Endothelial cell of umbilical vein (primary cell): ENCODE measurements at regions of chr18 and their contacts with region 1.

Region 1: GRCh38 chr18:71022389-71022788 is 733.5 kb downstream of the SOCS6 start:
- DNase-seq: peak; percentile 73
- H3K4me3 ChIP-seq: no peak overlapping the region
- H3K27ac ChIP-seq: peak overlapping the region; percentile 35
- H3K4me1 ChIP-seq: peaks cover 52% of the 10 kb centered on the region
- H3K27me3 ChIP-seq: no peaks in the 10 kb centered on the region
- CTCF ChIP-seq: no peak
- POLR2A ChIP-seq: no peak

Region 2: DNA sequence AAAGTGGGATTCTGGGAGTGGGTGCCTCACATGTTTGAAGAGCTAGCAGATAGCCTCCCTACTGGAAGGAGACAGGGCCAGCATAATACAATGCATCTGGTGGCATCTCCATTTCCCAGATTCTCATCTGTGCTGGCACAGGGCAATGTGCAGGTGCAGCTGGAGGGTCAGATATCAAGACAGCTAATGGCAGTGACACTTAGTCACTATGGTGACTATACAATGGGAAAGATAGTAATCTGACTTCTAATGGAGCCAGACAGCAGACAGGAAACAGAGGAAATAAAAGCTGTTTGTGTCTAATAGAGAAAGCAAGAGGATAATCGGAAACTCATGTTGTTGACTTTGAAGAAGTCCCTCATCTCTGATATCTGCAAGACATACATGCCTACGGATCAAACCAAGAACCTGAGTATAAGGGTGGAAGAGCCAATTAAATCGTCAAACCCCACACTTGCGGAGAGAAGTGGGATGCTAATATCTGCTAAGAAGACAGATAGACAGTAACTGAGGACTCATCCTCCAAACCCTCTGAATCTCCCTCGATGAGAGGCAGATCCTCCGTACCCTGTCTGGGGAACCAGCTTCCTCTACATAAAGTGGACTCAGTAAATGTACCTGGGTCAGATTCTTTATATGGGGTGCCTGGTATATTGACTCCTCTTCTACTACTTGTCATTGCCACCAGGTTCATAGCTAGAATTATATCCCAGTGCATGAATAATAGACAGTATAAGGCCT is 40.8 kb before region 1 on chr18:
- CTCF ChIA-PET with region 1: interaction called, 4 read pairs
- POLR2A ChIA-PET with region 1: no interaction called
- dilution Hi-C with region 1: no loop called
- intact Hi-C with region 1: loop called (anchors 1 kb)
- DNase-seq: peak; percentile 73
- H3K4me3 ChIP-seq: no peak overlapping the region
- H3K27ac ChIP-seq: peak overlapping the region; percentile 69
- H3K4me1 ChIP-seq: peaks cover 14% of the 10 kb centered on the region
- H3K27me3 ChIP-seq: no peaks in the 10 kb centered on the region
- CTCF ChIP-seq: no peak
- POLR2A ChIP-seq: no peak

Region 3: DNA sequence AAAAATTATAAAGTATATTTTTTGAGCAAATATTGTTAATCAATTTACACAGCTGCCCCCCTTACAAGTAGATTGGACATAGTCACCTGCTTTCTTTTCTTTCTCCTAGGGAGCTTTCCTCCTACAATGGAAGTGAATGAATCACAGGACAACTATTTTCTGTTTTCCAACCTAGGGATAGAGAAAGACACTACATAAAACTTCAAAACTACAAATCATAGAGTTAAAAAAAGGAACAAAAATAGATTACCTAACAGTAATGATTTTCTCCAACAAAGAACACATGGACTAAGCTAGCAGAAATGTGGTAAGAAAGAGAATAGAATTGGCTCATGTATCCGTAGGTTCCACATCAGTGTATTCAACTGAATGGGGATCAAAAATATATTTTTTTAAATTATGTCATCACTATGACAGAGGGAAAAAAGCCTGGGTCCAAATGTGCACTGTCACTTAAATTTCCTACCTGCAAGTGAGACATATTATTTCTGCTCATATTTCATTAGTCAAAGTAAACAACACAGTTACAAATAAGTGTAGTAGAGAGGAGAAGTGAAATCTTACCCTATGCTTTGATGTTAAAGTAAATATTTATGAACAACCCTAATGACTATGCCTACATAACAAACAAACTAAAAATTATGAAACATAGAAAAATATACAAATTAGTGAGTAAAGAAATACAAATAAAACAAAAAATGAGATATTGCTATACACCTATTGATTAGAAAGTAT is 23.1 kb after region 1 on chr18:
- CTCF ChIA-PET with region 1: no interaction called
- POLR2A ChIA-PET with region 1: interaction called, 4 read pairs
- dilution Hi-C with region 1: no loop called
- intact Hi-C with region 1: loop called (anchors 1 kb)
- DNase-seq: peak; percentile 58
- H3K4me3 ChIP-seq: no peak overlapping the region
- H3K27ac ChIP-seq: peak overlapping the region; percentile 35
- H3K4me1 ChIP-seq: peaks cover 48% of the 10 kb centered on the region
- H3K27me3 ChIP-seq: no peaks in the 10 kb centered on the region
- CTCF ChIP-seq: no peak
- POLR2A ChIP-seq: no peak